Right ventricle myocardium inferior (tissue), 1 donor: ENCODE measurements at regions of chr17 and their contacts with region 1.

Region 1: GRCh38 chr17:78421484-78422266 is 43.2 kb downstream of the PGS1 start:
- DNase-seq: peak; percentile 86
- ATAC-seq: peak; percentile 77

Region 2: DNA sequence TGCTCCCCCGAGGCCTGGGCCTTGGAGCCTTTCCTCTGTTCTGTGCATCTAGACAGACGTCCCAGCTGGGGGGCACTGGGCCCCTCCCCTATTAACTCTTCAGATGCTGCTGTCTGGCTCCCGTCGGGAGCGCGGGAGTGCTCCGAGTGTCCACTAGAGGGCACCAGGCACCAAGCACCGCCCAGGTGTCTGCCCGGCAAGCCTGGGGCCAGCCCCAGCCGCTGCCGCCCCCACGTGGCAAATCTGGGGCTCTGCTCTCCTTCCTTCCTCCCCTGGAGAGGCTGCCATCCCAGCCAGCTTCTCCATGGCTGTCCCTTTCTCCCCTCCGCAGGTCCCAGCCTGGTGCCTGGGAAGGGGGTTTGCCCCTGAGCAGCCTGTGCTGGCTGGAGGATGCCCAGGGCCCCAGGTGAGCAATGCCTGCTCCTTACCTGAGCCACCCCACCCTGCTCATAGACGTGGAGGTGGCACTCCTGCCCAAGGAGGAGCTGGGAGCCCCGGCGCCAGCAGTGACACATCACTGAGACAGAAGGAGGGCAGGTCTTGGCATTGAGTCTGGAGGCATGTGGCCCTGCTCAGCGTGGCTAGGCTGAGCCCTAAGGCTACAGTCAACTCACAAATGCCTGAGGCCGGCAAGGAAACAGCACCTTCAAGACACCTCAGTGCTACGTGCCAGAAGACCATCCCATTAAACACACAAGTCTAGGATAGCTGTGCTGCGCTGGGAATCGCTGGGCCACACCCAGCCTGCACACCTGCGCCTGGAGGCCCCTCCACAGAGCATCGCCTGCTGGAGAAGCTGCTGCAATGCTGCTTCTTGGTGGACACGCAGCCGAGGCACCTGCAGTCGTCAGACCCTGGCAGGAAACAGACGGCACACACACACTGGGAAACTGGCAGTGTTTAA is 170.5 kb before region 1 on chr17:
- intact Hi-C with region 1: loop called (anchors 2 kb)
- DNase-seq: peak; percentile 93
- ATAC-seq: peak; percentile 78

Region 3: DNA sequence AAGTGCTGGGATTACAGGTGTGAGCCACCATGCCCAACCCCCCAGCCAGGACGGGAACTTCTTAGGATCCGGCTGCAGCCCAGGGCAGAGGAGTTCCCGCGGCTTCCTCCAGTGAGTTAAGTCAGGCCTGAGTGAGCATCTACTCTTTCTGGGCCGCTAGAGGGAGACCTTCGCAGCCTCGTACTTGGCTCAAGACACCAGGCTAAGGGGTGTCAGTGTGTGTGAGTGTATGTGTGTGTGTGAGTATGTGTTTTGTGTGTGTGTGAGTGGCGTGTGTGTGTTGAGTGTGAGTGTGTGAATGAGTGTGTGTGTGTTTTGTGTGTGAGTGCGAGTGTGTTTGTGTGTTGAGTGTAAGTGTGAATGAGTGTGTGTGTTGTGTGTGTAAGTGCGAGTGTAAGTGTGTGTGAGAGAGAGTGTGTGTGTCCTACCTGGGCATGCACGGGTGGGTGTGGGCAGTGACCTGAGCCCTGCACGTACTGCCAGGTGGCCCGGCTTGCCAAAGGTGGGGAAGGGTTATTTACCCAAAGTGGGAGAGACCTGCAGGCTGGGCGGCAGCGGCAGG is 131.8 kb before region 1 on chr17:
- intact Hi-C with region 1: loop called (anchors 1 kb)
- DNase-seq: peak; percentile 85
- ATAC-seq: peak; percentile 90